ENCODE measurements at regions of chr2 and their contacts with region 1.

Region 1: GRCh38 chr2:61854474-61855182 is 768 bp upstream of the FAM161A start:
- DNase-seq: peak; percentile 91
- ATAC-seq: peak; percentile 94

Region 2: GRCh38 chr2:61340242-61340641 is 514.4 kb before region 1 on chr2:
- intact Hi-C with region 1: no loop called
- DNase-seq: no peak
- ATAC-seq: no peak

Region 3: DNA sequence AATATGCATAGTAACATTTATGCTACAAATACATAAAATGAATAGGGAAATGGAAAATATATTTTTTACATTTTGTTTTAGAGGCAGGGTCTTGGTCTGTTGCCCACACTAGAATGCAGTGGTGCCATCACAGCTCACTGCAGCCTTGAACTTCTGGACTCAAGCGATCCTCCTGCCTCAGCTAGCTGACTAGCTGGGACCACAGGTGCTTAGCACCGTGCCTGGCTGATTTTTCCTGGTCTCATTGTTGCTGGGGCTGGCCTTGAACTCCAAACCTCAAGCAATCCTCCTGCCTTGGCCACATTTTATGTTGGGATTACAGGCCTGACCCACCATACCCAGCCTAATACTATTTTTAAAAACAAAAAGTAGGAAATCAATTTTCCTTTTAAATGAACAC is 349.7 kb before region 1 on chr2:
- intact Hi-C with region 1: loop called (anchors 10 kb)
- DNase-seq: no peak
- ATAC-seq: no peak

Region 4: GRCh38 chr2:61775956-61776570 is 78.6 kb before region 1 on chr2:
- intact Hi-C with region 1: no loop called
- DNase-seq: no peak
- ATAC-seq: no peak

Region 5: DNA sequence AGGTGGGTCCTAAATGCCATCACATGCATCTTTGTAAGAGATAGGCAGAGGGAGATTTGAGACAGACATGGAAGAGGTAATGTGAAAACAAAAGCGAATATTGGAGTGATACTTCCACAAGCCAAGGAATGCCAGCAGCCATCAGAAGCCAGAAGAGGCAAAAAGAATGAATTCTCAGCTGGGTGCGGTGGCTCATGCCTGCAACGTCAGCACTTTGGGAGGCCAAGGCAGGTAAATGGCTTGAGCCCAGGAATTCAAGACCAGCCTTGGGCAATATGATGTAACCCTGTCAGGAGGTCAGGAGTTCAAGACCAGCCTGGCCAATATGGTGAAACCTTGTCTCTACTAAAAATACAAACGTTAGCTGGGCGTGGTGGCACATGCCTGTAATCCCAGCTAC is 55.6 kb before region 1 on chr2:
- intact Hi-C with region 1: no loop called
- DNase-seq: no peak
- ATAC-seq: no peak

Measured in Right ventricle myocardium inferior (tissue), 1 donor.